ENCODE measurements at regions of chr1 and their contacts with region 1.

Region 1: GRCh38 chr1:26321315-26322041 is 3.7 kb downstream of the CD52 start:
- DNase-seq: peak; percentile 97
- H3K4me3 ChIP-seq: no peak overlapping the region
- H3K27ac ChIP-seq: no peak overlapping the region
- H3K4me1 ChIP-seq: no peaks in the 10 kb centered on the region
- H3K27me3 ChIP-seq: no peaks in the 10 kb centered on the region
- CTCF ChIP-seq: peak; percentile 67

Region 2: DNA sequence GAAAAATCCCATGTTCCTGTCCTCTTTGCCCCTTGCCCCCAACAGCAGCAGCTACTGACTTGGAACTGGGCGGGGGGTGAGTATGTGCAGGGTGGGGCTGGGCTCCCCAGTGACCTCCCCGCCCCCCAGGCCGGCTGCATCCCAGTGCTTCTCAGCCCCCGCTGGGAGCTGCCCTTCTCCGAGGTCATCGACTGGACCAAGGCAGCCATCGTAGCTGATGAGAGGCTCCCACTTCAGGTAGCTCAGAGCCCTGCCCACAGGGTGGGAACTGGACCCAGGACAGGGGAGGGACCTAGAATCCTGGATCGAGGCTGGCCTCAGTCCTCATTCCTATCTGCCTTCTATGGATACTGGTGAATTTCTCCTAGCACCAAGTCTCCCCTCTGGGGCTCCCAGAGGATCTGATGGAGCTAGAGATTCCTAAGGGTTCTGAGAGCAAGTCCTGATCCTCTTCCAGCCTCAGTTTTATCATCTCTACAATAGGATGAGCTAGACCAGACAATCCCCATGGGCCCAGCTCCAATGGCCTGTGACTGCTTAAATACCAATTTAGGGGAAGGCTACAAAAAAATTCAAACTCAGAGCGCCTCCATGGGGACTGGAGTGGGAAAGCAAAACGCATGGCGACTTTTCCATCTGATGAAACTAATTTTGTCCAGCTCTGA is 291.9 kb before region 1 on chr1:
- intact Hi-C with region 1: no loop called
- DNase-seq: no peak
- H3K4me3 ChIP-seq: no peak overlapping the region
- H3K27ac ChIP-seq: no peak overlapping the region
- H3K4me1 ChIP-seq: no peaks in the 10 kb centered on the region
- H3K27me3 ChIP-seq: no peaks in the 10 kb centered on the region
- CTCF ChIP-seq: no peak

Region 3: GRCh38 chr1:26169669-26170471 is 151.6 kb before region 1 on chr1 and contains the start of gene ZNF593:
- intact Hi-C with region 1: loop called (anchors 10 kb)
- DNase-seq: peak; percentile 92
- H3K4me3 ChIP-seq: peak within 1 kb of the TSS; percentile 92
- H3K27ac ChIP-seq: peak within 1 kb of the TSS; percentile 48
- H3K4me1 ChIP-seq: peaks cover 6% of the 10 kb centered on the region
- H3K27me3 ChIP-seq: no peaks in the 10 kb centered on the region
- CTCF ChIP-seq: peak; percentile 88
- total RNA-seq, gene ZNF593: 22.0 to 47.7 TPM

Region 4: DNA sequence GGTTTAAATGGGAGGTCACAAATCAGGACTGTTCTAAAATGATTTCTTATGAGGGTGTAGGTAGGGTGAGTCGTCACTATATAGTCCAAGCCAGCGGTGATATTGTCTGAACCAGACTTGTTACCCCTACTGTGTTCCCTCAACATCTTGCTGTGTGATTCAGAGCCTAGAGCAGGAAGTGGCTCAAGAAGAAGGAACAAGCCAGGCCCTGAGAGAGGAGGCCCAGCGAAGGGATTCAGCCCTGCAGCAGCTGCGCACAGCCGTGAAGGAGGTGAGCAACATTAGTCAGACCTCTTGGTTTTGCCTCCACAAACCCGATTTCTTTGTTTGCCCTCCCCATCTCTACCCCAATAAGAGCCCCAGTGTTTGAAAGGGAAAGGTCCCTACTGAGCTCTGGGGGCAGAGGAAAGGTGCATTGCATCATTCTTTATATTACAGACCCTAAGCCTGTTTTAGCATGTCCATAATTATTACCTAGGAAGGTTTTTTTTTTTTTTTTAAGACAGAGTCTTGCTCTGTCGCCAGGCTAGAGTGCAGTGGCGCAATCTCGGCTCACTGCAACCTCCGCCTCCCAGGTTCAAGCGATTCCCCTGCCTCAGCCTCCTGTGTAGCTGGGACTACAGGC is 46.6 kb before region 1 on chr1:
- intact Hi-C with region 1: loop called (anchors 5 kb)
- DNase-seq: no peak
- H3K4me3 ChIP-seq: no peak overlapping the region
- H3K27ac ChIP-seq: peak overlapping the region; percentile 95
- H3K4me1 ChIP-seq: peaks cover 17% of the 10 kb centered on the region
- H3K27me3 ChIP-seq: no peaks in the 10 kb centered on the region
- CTCF ChIP-seq: no peak

Region 5: GRCh38 chr1:26363549-26364448 is 42.3 kb after region 1 on chr1:
- intact Hi-C with region 1: loop called (anchors 5 kb)
- DNase-seq: peak; percentile 87
- H3K4me3 ChIP-seq: no peak overlapping the region
- H3K27ac ChIP-seq: no peak overlapping the region
- H3K4me1 ChIP-seq: peaks cover 11% of the 10 kb centered on the region
- H3K27me3 ChIP-seq: peaks cover 19% of the 10 kb centered on the region
- CTCF ChIP-seq: peak; percentile 91